ENCODE measurements at regions of chr12 and their contacts with region 1.

Region 1: DNA sequence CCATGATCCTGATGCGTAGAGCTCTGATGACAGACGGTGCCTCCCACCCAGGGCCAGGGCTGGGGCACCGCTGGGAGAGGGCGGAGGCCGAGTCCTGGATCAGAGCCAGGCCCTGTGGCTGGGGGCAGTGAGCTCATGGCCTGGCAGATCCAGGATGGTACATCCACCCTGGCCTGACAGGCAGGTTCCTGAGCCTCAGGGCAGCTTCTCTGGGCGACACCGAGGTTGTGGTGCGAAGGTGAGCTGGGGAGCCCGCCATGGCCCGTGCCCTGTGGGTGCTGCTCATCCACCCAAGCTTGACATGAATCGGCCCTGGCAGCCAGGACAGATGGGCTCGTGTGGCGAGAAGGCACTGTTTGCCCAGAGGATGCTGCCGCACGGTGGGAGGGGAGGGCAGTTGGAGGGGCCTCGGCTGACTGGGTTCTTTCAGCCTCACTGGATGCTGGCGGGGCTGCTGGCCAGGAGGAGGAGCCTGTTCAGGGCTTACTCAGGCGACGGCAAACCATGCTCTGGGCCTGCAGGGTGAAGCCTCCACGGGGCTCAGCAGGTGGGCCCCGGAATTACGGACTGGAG is 16.6 kb downstream of the LRTM2 start:
- DNase-seq: peak; percentile 17
- ATAC-seq: peak; percentile 40
- H3K4me3 ChIP-seq: no peak overlapping the region; a peak in 1 of 6 replicates
- H3K27ac ChIP-seq: no peak overlapping the region
- H3K4me1 ChIP-seq: peaks cover 61% of the 10 kb centered on the region
- H3K27me3 ChIP-seq: peaks cover 3 to 33% of the 10 kb centered on the region in 2 experiments; a peak in 4 of 5 replicates
- CTCF ChIP-seq: no peak
- EP300 ChIP-seq: no peak
- POLR2A ChIP-seq: no peak
- RAD21 ChIP-seq: no peak

Region 2: DNA sequence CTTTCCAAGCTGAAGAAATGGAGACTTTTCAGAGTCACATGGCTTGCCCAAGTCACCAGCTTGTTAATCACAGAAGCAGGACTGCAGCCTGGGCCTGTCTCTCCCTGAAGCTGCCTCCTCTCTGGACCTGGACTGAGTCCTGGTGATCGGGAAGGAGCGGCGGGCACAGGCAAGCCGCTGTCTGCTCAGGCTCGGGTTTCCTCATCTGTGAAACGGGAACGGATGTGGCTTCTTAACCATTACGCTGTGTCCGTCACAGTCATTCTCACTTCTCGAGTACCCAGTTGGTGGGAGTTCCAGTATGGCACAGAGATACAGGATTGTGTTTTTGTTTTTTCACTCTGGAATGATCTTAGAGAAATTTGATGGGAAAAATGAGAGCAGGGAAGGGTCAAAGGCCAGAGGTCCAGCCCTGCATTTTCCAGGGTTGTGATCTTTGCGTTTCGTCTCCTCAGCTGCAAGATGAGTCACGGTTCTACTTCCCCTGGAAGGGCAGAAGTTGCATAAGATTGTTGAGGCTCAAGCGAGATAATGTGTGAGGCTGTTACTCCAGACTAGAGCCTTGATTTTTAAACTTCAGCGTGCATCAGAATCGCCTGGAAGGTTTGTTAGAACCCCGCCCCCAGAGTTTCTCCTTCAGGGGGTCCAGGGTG is 24.2 kb before region 1 on chr12:
- CTCF ChIA-PET with region 1: no interaction called
- POLR2A ChIA-PET with region 1: interaction called, 31 read pairs
- in situ Hi-C with region 1: no loop called
- intact Hi-C with region 1: no loop called
- DNase-seq: peak; percentile 79
- ATAC-seq: peak; percentile 36
- H3K4me3 ChIP-seq: peak overlapping the region; percentile 30 to 80 (median 63)
- H3K27ac ChIP-seq: peak overlapping the region; percentile 75
- H3K4me1 ChIP-seq: peaks cover 96% of the 10 kb centered on the region
- H3K27me3 ChIP-seq: no peaks in the 10 kb centered on the region
- CTCF ChIP-seq: no peak
- EP300 ChIP-seq: peak in 1 of 2 experiments; percentile 83; a peak in 2 of 4 replicates
- POLR2A ChIP-seq: no peak
- RAD21 ChIP-seq: no peak

Region 3: GRCh38 chr12:1896964-1897363 is 60.0 kb after region 1 on chr12:
- CTCF ChIA-PET with region 1: no interaction called
- POLR2A ChIA-PET with region 1: no interaction called
- in situ Hi-C with region 1: no loop called
- intact Hi-C with region 1: no loop called
- DNase-seq: no peak
- ATAC-seq: no peak
- H3K4me3 ChIP-seq: no peak overlapping the region
- H3K27ac ChIP-seq: no peak overlapping the region
- H3K4me1 ChIP-seq: no peaks in the 10 kb centered on the region
- H3K27me3 ChIP-seq: no peaks in the 10 kb centered on the region
- CTCF ChIP-seq: no peak
- EP300 ChIP-seq: no peak
- POLR2A ChIP-seq: no peak
- RAD21 ChIP-seq: no peak

Measured in HepG2 (cell line).